Natural killer cell (primary cell): ENCODE measurements at regions of chr1 and their contacts with region 1.

Region 1: GRCh38 chr1:229341774-229342655 is 832 bp downstream of the CCSAP start:
- DNase-seq: peak; percentile 76 to 88
- ATAC-seq: peak; percentile 86 to 93 (median 86)
- H3K4me3 ChIP-seq: peak overlapping the region; percentile 60
- H3K4me3 Mint-ChIP-seq: peak overlapping the region; percentile 93
- H3K27ac ChIP-seq: peak overlapping the region; percentile 41
- H3K27ac Mint-ChIP-seq: peak overlapping the region; percentile 73 to 81
- H3K4me1 ChIP-seq: peaks cover 21% of the 10 kb centered on the region
- H3K4me1 Mint-ChIP-seq: peaks cover 39% of the 10 kb centered on the region in 2 donors
- H3K27me3 ChIP-seq: no peaks in the 10 kb centered on the region
- H3K27me3 Mint-ChIP-seq: peaks cover 6 to 13% of the 10 kb centered on the region in 2 donors
- CTCF ChIP-seq: no peak

Region 2: GRCh38 chr1:229270547-229271447 is 71.2 kb before region 1 on chr1 and contains the start of gene RAB4A:
- intact Hi-C with region 1: loop called (anchors 5 kb)
- DNase-seq: peak; percentile 83 to 89
- ATAC-seq: peak; percentile 93 to 95 (median 95)
- H3K4me3 ChIP-seq: peak within 1 kb of the TSS; percentile 41
- H3K4me3 Mint-ChIP-seq: peak within 1 kb of the TSS; percentile 94
- H3K27ac ChIP-seq: peak within 1 kb of the TSS; percentile 28
- H3K27ac Mint-ChIP-seq: peak within 1 kb of the TSS; percentile 84 to 88
- H3K4me1 ChIP-seq: peaks cover 18% of the 10 kb centered on the region
- H3K4me1 Mint-ChIP-seq: peaks cover 30 to 31% of the 10 kb centered on the region in 2 donors
- H3K27me3 ChIP-seq: no peaks in the 10 kb centered on the region
- H3K27me3 Mint-ChIP-seq: no peaks in the 10 kb centered on the region
- CTCF ChIP-seq: no peak
- total RNA-seq, gene RAB4A: 31.2 to 47.1 (median 31.6) TPM

Region 3: GRCh38 chr1:229325853-229326502 is 16.0 kb before region 1 on chr1:
- intact Hi-C with region 1: loop called (anchors 2 kb)
- DNase-seq: no peak
- ATAC-seq: peak in 2 of 3 donors; percentile 56 to 62
- H3K4me3 ChIP-seq: no peak overlapping the region
- H3K4me3 Mint-ChIP-seq: peak overlapping the region; percentile 62
- H3K27ac ChIP-seq: no peak overlapping the region
- H3K27ac Mint-ChIP-seq: peak overlapping the region; percentile 48 to 86
- H3K4me1 ChIP-seq: no peaks in the 10 kb centered on the region
- H3K4me1 Mint-ChIP-seq: peaks cover 11 to 16% of the 10 kb centered on the region in 2 donors
- H3K27me3 ChIP-seq: no peaks in the 10 kb centered on the region
- H3K27me3 Mint-ChIP-seq: no peaks in the 10 kb centered on the region
- CTCF ChIP-seq: no peak

Region 4: DNA sequence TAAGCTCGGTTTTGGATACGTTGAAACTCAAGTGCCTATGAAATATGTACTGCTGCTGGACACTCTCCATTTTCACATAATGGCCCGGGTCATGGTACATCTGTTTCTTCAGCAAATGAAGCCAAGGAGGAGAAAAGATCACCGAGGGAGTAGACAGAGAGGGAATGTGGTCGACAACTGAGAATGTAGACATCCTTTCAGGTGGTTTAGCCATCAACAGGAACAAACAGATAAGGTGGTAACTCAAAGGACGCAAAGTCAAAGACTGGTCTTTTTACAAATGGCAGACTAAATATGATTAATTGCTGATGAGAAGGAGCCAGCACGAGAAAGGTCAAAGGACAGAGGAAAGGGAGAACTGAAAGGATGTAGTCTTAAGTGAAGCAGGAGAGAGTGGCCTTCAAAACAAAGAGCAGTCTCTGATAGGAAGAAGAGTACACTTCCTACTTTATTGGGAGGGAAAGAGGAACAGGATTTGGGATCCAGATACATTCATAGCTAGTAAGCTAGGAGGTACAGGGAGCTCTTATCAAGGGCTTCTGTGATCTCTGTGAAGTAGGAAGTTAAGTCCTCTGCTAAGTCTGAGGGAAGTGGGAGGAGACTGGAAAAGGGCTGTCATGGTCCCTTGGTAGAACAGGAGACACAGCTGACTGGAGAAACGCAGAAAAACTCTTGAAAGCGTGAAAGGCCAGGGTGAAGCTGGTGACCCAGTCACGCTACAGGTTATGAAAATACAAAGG is 137.8 kb after region 1 on chr1:
- intact Hi-C with region 1: loop called (anchors 5 kb)
- DNase-seq: no peak
- ATAC-seq: peak; percentile 14 to 51 (median 47)
- H3K4me3 ChIP-seq: no peak overlapping the region
- H3K4me3 Mint-ChIP-seq: no peak overlapping the region
- H3K27ac ChIP-seq: peak overlapping the region; percentile 60
- H3K27ac Mint-ChIP-seq: peak overlapping the region; percentile 52 to 71
- H3K4me1 ChIP-seq: peaks cover 3% of the 10 kb centered on the region
- H3K4me1 Mint-ChIP-seq: peaks cover 26 to 29% of the 10 kb centered on the region in 2 donors
- H3K27me3 ChIP-seq: no peaks in the 10 kb centered on the region
- H3K27me3 Mint-ChIP-seq: no peaks in the 10 kb centered on the region
- CTCF ChIP-seq: no peak

Region 5: DNA sequence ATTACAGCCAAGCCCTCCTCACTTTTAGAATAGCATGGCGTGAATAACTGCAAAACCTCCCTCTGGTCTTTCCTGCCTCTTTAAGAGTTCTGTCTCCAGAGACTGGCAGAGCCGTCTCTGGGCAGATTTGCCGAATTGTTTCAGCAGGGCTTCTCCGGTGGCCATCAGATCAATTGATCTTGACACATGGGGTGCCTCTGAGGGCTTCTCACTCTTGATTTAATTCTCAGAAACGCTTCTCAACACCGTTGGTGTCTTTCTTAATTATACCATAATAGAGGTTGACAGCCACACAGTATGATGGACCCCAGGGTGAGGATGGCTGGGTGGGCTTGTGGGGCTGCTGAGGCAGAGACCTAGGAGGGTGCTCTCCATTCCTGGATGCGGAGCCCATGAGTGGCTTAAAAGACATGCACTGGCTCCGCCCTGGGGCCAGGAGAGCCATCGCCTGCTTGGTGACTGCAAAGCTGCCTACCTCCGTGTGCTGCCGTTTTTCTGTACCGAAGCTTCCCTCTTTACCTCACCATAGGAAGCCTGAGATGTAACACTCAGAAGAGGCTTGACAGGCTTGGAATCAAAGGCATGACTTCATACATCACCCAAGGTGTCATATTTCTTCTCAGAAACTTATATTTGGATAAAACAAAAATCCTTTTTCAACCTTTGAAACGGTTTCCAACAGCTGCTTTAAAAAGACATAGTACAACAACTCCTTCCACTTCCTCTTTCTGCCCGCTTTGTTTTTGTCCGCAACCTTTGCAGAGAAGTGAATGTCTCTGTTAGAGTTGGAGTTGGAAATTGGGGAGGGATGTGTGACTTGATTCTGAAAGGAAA is 808.0 kb after region 1 on chr1:
- intact Hi-C with region 1: no loop called
- DNase-seq: peak in 1 of 2 donors; percentile 16
- ATAC-seq: peak; percentile 63 to 66 (median 64)
- H3K4me3 ChIP-seq: peak overlapping the region; percentile 2
- H3K4me3 Mint-ChIP-seq: peak overlapping the region; percentile 81
- H3K27ac ChIP-seq: peak overlapping the region; percentile 59
- H3K27ac Mint-ChIP-seq: peak overlapping the region; percentile 67 to 71
- H3K4me1 ChIP-seq: peaks cover 53% of the 10 kb centered on the region
- H3K4me1 Mint-ChIP-seq: peaks cover 62 to 65% of the 10 kb centered on the region in 2 donors
- H3K27me3 ChIP-seq: no peaks in the 10 kb centered on the region
- H3K27me3 Mint-ChIP-seq: no peaks in the 10 kb centered on the region
- CTCF ChIP-seq: no peak